A549 (cell line): ENCODE measurements at regions of chr3 and their contacts with region 1.

Region 1: GRCh38 chr3:195850857-195851543 is 39.3 kb upstream of the MUC4 start:
- DNase-seq: peak; percentile 69 to 88
- ATAC-seq: peak; percentile 80 to 83
- H3K4me3 ChIP-seq: no peak overlapping the region
- H3K27ac ChIP-seq: no peak overlapping the region
- H3K4me1 ChIP-seq: peaks cover 14% of the 10 kb centered on the region
- CTCF ChIP-seq: peak; percentile 99
- EP300 ChIP-seq: no peak
- POLR2A ChIP-seq: no peak
- RAD21 ChIP-seq: peak; percentile 89 to 90

Region 2: DNA sequence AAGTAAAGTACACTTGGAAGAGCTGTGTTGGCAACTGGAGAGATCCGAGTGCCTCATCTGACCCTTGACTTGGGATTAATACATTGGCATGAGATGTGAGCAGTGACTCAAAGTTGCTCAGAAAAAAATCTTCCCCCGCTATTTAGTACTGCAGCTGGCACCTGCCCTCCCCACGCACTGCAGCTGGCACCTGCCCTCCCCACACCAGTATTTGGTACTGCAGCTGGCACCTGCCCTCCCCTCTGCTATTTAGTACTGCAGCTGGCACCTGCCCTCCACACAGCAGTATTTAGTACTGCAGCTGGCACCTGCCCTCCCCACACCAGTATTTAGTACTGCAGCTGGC is 134.2 kb before region 1 on chr3:
- CTCF ChIA-PET with region 1: interaction called, 33 read pairs
- POLR2A ChIA-PET with region 1: no interaction called
- DNase-seq: peak in 1 of 2 experiments; percentile 46
- ATAC-seq: peak; percentile 63 to 74
- H3K4me3 ChIP-seq: no peak overlapping the region
- H3K27ac ChIP-seq: peak overlapping the region; percentile 58 to 65
- H3K4me1 ChIP-seq: peaks cover 36% of the 10 kb centered on the region
- CTCF ChIP-seq: no peak
- EP300 ChIP-seq: 0 out of 5 replicates have a peak, but pooled peaks of 1 of the 2 experiments have one; percentile 10
- POLR2A ChIP-seq: no peak
- RAD21 ChIP-seq: no peak

Region 3: DNA sequence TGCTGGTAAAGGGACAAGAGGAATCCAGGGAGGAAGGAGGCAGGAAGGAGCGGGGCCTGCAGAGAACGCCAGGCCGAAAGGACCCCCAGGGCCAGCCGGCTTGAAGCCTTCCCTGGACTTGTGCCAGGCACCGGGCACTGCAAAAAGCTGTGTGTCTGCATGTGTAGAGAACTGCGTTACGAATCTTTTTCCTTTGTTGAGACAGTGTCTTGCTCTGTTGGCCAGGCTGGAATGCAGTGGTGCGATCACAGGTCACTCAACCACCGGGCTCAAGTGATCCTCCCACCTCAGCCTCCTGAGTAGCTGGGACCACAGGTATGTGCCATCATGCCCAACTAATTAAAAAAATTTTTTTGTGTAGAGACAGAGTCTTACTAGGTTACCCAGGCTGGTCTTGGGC is 22.2 kb before region 1 on chr3:
- CTCF ChIA-PET with region 1: interaction called, 26 read pairs
- POLR2A ChIA-PET with region 1: no interaction called
- DNase-seq: no peak
- ATAC-seq: no peak
- H3K4me3 ChIP-seq: no peak overlapping the region
- H3K27ac ChIP-seq: no peak overlapping the region
- H3K4me1 ChIP-seq: no peaks in the 10 kb centered on the region
- CTCF ChIP-seq: no peak
- EP300 ChIP-seq: no peak
- POLR2A ChIP-seq: no peak
- RAD21 ChIP-seq: no peak

Region 4: DNA sequence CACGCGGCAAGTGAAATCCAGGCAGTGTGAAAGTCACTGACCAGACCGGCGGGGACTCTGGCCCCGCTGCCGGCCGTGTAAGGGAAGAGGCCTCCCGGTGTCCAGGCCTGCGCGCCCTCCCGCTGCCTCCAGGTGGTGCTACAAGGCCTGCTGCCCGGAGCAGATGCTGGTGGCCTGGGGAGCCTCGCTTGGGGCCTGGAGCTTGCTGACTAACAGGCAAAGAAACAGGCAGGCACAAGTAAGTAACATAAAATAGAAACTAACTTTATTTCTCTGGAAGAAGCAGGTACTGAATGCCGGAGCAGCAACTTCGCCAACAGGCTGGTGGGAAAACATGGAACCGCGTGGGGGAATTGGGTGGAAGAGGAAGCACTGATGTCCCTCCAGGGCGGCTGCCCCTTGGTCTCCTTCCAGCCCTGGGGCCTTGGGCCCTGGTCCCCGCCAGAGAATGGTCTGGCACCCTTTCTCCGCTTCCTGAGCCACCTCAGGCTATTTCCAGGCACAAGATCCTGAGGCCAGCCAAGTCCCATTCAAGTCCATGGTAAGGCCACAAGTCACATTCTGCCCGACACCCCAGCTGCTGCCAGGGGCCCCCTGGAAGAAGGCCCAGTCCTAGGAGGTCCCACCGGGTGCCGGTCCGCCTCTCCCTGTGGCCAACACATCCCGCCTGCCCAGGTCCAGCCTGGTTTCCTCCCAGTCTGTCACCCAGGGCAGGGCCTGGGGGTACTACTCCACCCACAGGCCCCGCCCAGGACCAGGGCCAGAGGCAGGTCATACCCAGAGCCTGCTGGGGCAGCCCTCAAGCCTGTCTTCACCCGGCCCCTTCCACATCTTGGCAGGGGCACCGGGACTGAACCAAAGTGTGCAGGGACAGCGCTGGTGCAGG is 12.4 kb after region 1 on chr3:
- CTCF ChIA-PET with region 1: interaction called, 17 read pairs
- POLR2A ChIA-PET with region 1: no interaction called
- DNase-seq: peak; percentile 53 to 79
- ATAC-seq: peak; percentile 96 to 99
- H3K4me3 ChIP-seq: no peak overlapping the region
- H3K27ac ChIP-seq: no peak overlapping the region
- H3K4me1 ChIP-seq: peaks cover 4% of the 10 kb centered on the region; the same call in 1 of the 3 replicates
- CTCF ChIP-seq: peak; percentile 74
- EP300 ChIP-seq: no peak
- POLR2A ChIP-seq: no peak
- RAD21 ChIP-seq: peak; percentile 69 to 73

Region 5: DNA sequence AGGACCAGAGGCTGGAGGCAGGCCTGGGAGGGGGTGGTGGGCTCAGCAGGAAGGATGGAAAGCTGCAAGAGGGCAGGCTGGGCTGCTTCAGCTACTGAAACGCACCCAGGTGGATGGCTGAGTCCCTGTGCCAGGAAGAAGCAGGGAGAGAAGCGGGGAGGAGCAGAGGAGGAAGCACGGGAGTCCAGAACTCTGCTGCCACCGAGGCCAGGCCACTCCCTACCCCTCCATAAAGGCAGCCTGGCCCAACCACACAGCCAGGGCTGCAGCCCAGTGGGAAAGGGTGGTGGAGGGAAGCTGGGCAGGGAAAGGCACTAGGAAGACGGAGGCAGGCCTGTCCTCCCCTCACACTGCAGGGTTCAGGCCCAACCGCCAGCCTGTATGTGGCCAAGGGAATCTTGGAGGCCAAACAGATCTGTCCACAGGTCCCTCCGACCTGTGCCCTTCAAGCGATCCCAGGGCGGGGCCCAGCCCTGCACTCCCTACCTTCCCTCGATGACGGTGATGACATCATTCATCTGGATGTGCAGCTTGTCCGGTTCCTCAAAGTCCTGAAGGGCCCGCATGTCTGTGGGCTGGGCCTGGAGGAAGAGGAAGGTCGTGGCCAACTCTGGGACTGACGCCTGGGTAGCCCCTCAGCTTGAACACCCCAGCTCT is 26.9 kb after region 1 on chr3:
- CTCF ChIA-PET with region 1: no interaction called
- POLR2A ChIA-PET with region 1: no interaction called
- DNase-seq: no peak
- ATAC-seq: no peak
- H3K4me3 ChIP-seq: no peak overlapping the region
- H3K27ac ChIP-seq: no peak overlapping the region
- H3K4me1 ChIP-seq: peaks cover 15% of the 10 kb centered on the region
- CTCF ChIP-seq: no peak
- EP300 ChIP-seq: no peak
- POLR2A ChIP-seq: no peak
- RAD21 ChIP-seq: no peak

Region 6: DNA sequence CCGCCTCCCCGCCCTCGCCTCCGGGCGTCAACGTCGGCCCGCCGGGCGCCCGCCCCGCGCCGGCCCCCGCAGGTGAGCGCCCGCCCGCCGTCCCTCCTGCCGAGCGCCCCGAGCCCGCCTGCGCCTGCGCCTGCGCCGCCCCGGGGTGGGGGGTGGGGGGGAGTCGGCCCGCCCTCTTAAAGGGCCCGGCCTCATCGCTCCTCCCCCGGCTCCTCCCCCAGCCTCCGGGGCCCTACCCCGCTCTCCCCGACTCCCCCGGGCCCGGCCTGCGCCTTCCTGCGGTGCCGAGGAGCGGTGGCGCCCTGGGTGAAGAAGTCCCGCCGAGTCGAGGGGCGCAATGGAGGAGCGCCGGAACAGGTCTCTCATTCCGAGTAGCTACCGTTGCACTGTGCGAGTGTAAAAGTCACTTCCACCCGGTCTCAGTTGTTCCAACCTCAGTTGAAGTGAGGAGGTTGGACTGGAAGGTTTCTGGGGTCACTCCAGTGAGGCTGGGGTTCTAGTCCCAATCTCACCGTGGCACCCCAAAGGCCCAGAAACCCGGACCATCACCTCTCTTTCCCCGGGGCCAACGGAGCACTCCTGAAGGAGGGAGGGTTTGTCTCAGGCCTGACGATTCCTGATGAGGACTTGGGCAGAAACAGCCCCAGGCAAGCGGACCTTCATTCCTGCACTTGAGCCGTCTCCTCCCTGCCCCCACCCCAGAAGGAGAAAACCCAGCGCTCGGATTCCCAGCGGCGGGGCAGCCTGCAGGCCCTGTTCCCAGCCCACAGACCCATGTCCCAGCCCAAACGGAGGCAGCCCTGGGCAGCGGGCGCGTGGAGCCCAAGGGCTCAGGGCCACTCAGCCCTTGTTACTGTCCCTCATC is 58.9 kb after region 1 on chr3:
- CTCF ChIA-PET with region 1: interaction called, 21 read pairs
- POLR2A ChIA-PET with region 1: no interaction called
- DNase-seq: peak; percentile 66 to 82
- ATAC-seq: peak; percentile 70 to 80
- H3K4me3 ChIP-seq: peak overlapping the region; percentile 90
- H3K27ac ChIP-seq: peak overlapping the region; percentile 86 to 97
- H3K4me1 ChIP-seq: peaks cover 39% of the 10 kb centered on the region
- CTCF ChIP-seq: no peak
- EP300 ChIP-seq: no peak
- POLR2A ChIP-seq: peak; percentile 64
- RAD21 ChIP-seq: no peak

Region 7: GRCh38 chr3:195956571-195956970 is 105.6 kb after region 1 on chr3:
- CTCF ChIA-PET with region 1: no interaction called
- POLR2A ChIA-PET with region 1: no interaction called
- DNase-seq: no peak
- ATAC-seq: no peak
- H3K4me3 ChIP-seq: no peak overlapping the region
- H3K27ac ChIP-seq: no peak overlapping the region
- H3K4me1 ChIP-seq: no peaks in the 10 kb centered on the region
- CTCF ChIP-seq: no peak
- EP300 ChIP-seq: no peak
- POLR2A ChIP-seq: no peak
- RAD21 ChIP-seq: no peak